Activated CD4-positive, alpha-beta T cell treated with anti-CD3 and anti-CD28 coated beads, Interleukin-2, amount 10 ng/mL, durations not matched to agents 24 days and 14 days (primary cell): ENCODE measurements at regions of chr4 and their contacts with region 1.

Region 1: GRCh38 chr4:184649026-184649970 is at the starts of genes CASP3 and PRIMPOL:
- DNase-seq: peak; percentile 99
- H3K4me3 Mint-ChIP-seq: peak within 1 kb of the TSS; percentile 99
- H3K27ac Mint-ChIP-seq: peak within 1 kb of the TSS; percentile 92
- H3K4me1 Mint-ChIP-seq: peaks cover 51% of the 10 kb centered on the region
- H3K27me3 Mint-ChIP-seq: no peaks in the 10 kb centered on the region
- total RNA-seq, gene CASP3: 84.8 and 89.8 TPM in 2 replicates
- total RNA-seq, gene PRIMPOL: 14.7 and 17.6 TPM in 2 replicates

Region 2: GRCh38 chr4:184282251-184282713 is 367.0 kb before region 1 on chr4:
- intact Hi-C with region 1: loop called (anchors 1 kb)
- DNase-seq: peak; percentile 87
- H3K4me3 Mint-ChIP-seq: peak overlapping the region; percentile 66
- H3K27ac Mint-ChIP-seq: peak overlapping the region; percentile 90
- H3K4me1 Mint-ChIP-seq: peaks cover 62% of the 10 kb centered on the region
- H3K27me3 Mint-ChIP-seq: no peaks in the 10 kb centered on the region

Region 3: DNA sequence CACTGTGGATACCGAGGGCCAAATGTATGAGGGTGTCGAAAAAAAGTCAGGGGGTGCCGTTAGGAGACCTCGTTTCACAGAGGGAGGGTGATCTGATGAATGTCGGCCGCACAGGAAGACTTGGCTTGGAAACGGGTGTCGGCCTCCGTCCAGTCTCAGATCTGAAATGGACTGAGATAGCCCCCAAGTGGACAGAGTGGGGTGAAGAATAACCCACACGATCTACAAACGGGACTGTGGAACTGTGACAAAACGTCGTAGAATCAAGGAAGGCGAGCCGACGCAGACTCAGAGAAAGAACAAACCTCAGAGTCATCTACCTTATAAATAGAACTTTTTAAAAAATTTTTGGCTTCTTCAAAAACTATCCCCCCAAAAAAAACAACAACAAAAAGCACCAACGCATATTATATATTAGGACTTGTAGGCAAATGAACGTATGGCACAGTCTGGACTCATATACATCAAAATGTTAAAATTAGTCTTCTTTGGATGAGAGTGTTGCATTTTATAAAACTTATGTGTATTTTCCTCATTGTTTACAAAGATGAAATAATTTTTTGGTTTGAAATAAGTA is 111.2 kb before region 1 on chr4:
- intact Hi-C with region 1: loop called (anchors 1 kb)
- DNase-seq: peak; percentile 89
- H3K4me3 Mint-ChIP-seq: peak overlapping the region; percentile 90
- H3K27ac Mint-ChIP-seq: peak overlapping the region; percentile 92
- H3K4me1 Mint-ChIP-seq: peaks cover 33% of the 10 kb centered on the region
- H3K27me3 Mint-ChIP-seq: no peaks in the 10 kb centered on the region

Region 4: GRCh38 chr4:184563621-184564020 is 85.7 kb before region 1 on chr4:
- intact Hi-C with region 1: no loop called
- DNase-seq: no peak
- H3K4me3 Mint-ChIP-seq: no peak overlapping the region
- H3K27ac Mint-ChIP-seq: no peak overlapping the region
- H3K4me1 Mint-ChIP-seq: peaks cover 5% of the 10 kb centered on the region
- H3K27me3 Mint-ChIP-seq: no peaks in the 10 kb centered on the region

Region 5: GRCh38 chr4:184583738-184584502 is 65.4 kb before region 1 on chr4:
- intact Hi-C with region 1: loop called (anchors 2 kb)
- DNase-seq: peak; percentile 68
- H3K4me3 Mint-ChIP-seq: peak overlapping the region; percentile 19
- H3K27ac Mint-ChIP-seq: peak overlapping the region; percentile 75
- H3K4me1 Mint-ChIP-seq: peaks cover 23% of the 10 kb centered on the region
- H3K27me3 Mint-ChIP-seq: no peaks in the 10 kb centered on the region

Region 6: DNA sequence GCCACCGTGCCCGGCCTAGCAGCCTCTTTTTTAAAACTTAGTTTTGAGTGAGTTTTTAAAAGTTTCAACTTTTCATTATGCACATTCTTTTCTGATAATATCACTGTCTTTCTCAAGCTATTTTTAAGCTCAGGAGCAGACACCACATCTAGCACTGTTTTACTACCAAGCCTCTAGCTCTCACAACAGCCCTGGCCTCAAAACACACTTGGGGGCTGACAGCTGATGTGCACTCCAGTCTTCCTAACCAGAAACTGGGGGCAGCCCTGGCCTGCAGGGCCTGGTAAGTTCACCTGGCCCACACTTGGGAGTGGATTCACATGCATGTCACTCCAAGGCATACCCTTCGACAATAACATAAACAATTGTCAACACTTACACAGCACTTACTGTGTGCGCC is 50.6 kb after region 1 on chr4:
- intact Hi-C with region 1: no loop called
- DNase-seq: peak; percentile 52
- H3K4me3 Mint-ChIP-seq: no peak overlapping the region
- H3K27ac Mint-ChIP-seq: peak overlapping the region; percentile 4
- H3K4me1 Mint-ChIP-seq: peaks cover 1% of the 10 kb centered on the region
- H3K27me3 Mint-ChIP-seq: no peaks in the 10 kb centered on the region

Region 7: DNA sequence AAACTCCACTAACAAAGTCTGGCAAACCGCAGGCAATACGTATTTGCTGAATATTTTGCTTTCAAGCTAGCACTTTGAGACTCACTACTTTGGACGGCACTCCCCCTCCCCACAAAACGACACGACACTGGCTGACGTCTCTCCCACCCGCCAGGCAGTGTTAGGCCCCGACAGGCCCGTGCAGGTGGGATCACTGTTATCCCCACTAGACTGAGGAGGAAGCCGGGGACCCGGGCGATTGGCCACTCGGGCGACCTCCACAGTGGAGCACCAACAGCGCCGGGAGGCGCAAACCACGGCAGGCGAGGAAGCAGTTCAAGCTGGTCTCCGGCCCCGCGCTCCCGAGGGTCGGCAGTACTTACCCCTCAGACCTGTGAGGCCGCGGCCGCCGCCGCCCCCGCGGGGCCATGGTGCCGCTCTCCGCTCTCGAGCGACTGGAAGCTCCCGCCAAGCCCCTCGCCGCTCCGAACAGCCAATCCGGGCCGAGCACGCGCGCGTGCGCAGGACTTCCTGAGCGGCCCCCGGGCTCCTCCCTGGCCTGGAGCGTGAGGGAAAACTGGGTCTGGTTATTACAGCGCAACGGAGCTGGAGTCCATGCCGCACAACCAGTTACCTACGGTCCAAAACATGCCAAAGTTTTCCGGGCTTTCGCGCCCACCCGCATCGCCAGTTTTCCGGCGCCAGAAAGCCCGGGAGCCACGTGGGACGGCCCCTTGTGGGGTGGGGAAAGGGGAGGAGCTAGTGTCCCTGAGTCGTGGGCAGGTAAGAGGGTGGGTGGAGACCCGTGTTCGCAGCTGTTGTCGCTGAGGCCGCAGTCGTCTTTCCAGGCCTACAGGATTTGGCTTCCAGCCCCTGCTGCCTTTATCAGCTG is 84.6 kb after region 1 on chr4 and contains the start of gene CENPU:
- intact Hi-C with region 1: loop called (anchors 1 kb)
- DNase-seq: peak; percentile 99
- H3K4me3 Mint-ChIP-seq: peak within 1 kb of the TSS; percentile 96
- H3K27ac Mint-ChIP-seq: peak within 1 kb of the TSS; percentile 93
- H3K4me1 Mint-ChIP-seq: peaks cover 41% of the 10 kb centered on the region
- H3K27me3 Mint-ChIP-seq: no peaks in the 10 kb centered on the region
- total RNA-seq, gene CENPU: 71.7 and 75.5 TPM in 2 replicates